Lower leg skin (tissue), 4 donors: ENCODE measurements at regions of chr2 and their contacts with region 1.

Region 1: DNA sequence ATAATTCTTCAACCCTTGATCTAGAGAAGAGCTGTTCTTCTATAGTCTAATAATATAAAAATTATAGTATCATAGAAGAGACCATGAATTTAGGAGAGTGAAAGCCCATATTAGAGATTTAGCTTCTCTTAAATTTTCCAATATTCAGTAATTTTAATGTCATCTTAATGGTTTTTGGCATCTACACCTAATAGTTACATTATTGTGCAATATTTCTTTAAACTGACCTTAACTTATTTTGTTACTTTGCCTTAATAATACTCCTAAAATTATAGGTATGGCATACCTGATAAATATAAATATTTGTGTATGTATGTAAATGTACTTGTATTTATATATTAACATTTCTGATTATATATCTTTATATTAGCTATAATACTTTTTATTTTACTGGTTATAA is 78.0 kb upstream of the CWC22 start:
- DNase-seq: no peak
- H3K4me3 ChIP-seq: no peak overlapping the region
- CTCF ChIP-seq: no peak
- POLR2A ChIP-seq: no peak

Region 2: DNA sequence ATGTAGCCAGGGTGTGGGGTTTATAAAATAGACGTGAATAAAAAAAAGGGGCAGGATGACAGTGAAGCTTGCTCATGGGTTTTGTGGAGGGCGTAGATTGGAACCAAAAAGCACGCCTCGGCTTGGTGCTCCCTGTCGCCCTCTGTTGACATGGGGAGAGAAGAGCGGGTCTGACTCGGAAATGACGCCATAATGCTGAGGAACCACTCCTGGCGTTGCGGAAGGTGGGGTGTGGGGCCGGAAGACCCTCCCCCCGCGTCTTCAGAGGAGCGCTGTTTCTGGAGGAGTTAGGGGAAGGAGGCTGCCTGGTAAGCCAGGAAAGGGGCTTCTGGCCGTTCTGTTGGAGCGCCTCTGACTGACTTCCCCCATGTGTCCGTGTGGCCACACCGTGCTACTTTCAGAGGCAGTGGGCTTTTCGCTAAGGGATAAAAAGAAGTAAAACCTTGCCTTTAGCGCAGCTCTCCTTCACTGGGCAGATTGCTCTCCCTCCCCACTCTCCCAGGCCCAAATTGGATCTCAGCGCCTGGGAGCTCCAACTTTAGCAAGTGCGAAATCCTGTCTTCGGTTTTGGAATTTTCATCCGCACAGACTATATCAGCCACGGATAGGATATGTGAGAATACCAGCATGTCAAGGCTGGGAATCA is 1562.1 kb before region 1 on chr2:
- intact Hi-C with region 1: loop called (anchors 10 kb)
- DNase-seq: peak; percentile 64 to 95
- H3K4me3 ChIP-seq: peak overlapping the region; percentile 44
- CTCF ChIP-seq: peak in 1 of 3 donors; percentile 46
- POLR2A ChIP-seq: no peak

Region 3: DNA sequence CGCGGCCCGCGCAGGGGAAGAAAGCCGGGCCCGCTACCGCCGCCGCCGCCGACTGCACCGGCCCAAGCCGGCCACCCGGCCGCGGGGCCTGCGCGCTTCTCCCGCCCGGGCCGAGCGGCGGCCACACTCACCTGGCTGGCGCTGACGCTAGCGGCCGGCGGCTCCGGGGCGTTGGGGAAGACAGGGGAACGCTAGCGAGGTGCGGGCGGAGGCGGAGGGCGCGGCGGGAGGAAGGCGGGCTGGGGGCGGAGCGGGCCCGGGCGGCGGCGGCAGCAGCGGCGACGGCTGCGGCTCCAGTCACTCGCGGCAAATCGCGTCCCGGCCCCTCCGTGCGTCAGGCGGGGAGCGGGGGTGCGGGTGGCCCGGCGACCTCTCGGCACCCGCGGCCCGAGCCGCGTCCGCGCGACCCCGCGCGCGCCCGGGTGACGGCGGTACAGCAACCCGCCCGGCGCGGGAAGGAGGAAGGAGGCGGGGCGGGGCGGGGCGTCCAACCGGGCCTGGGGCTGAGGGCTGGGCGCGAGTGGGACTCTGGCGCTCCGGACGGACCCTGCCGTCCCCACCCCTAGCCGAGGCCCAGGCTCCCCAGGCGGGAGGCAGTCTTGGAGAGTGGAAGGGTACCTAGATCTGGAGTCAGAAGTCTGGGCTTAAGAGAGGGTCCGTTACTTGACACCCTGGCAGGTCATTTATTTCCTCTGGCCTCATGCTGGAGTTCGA is 820.6 kb before region 1 on chr2 and contains the start of gene SESTD1:
- intact Hi-C with region 1: no loop called
- DNase-seq: peak; percentile 47 to 95
- H3K4me3 ChIP-seq: peak within 1 kb of the TSS; percentile 55
- CTCF ChIP-seq: no peak
- POLR2A ChIP-seq: no peak
- total RNA-seq, gene SESTD1: 8.7 to 22.9 (median 11.8) TPM